ENCODE measurements at regions of chr1 and their contacts with region 1.

Region 1: GRCh38 chr1:206982216-206982615 is 12.0 kb upstream of the FCAMR start:
- DNase-seq: peak; percentile 56 to 68 (median 66)
- H3K4me3 ChIP-seq: no peak overlapping the region
- H3K27ac ChIP-seq: no peak overlapping the region
- H3K4me1 ChIP-seq: peaks cover 0 to 5% (median 0%) of the 10 kb centered on the region in 4 experiments
- H3K27me3 ChIP-seq: peaks cover 0 to 6% (median 0%) of the 10 kb centered on the region in 5 experiments

Region 2: GRCh38 chr1:206734499-206735142 is 247.6 kb before region 1 on chr1:
- CTCF ChIA-PET with region 1: interaction called, 31 read pairs
- POLR2A ChIA-PET with region 1: no interaction called
- DNase-seq: peak; percentile 36 to 69 (median 65)
- H3K4me3 ChIP-seq: no peak overlapping the region
- H3K27ac ChIP-seq: no peak overlapping the region
- H3K4me1 ChIP-seq: peaks cover 0 to 38% (median 36%) of the 10 kb centered on the region in 4 experiments
- H3K27me3 ChIP-seq: no peaks in the 10 kb centered on the region

Region 3: DNA sequence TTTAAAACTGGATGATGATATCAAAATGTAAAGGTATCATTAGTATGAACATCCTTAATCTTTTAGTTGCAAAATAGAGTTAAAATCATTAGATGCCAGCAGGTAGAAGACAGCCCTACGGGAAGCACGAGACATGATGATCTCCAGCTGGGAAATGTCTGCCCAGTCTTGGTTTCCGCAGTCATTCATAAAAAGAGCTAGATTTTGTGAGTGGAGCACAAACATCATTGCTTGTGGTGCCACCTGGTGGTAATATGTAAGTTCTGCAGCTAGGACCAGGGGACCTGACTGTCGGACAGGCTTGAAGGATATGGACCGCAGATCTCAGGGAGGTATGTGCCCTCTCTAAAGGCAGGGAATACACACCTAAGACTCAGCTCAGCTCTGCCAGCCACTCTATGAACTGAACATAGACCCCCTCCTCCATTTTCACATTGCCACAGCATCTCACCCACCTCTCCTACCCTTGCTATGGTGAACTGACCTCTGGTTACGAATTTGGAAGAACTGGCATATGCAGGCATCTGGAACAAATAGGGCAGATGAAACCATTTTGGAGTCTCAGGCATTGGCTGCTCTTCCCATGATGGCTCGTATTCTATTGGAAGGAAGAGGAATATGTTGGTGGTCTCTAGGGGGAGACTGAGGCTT is 69.6 kb before region 1 on chr1:
- CTCF ChIA-PET with region 1: interaction called, 26 read pairs
- POLR2A ChIA-PET with region 1: no interaction called
- DNase-seq: peak; percentile 74 to 84 (median 77)
- H3K4me3 ChIP-seq: no peak overlapping the region
- H3K27ac ChIP-seq: no peak overlapping the region
- H3K4me1 ChIP-seq: peaks cover 3 to 27% (median 13%) of the 10 kb centered on the region in 4 experiments
- H3K27me3 ChIP-seq: peaks cover 0 to 9% (median 0%) of the 10 kb centered on the region in 5 experiments

Region 4: GRCh38 chr1:206935491-206936067 is 46.6 kb before region 1 on chr1:
- CTCF ChIA-PET with region 1: interaction called, 220 read pairs
- POLR2A ChIA-PET with region 1: interaction called, 4 read pairs
- DNase-seq: peak; percentile 72 to 87 (median 85)
- H3K4me3 ChIP-seq: no peak overlapping the region
- H3K27ac ChIP-seq: no peak overlapping the region
- H3K4me1 ChIP-seq: peaks cover under 1 to 2% (median 2%) of the 10 kb centered on the region in 4 experiments
- H3K27me3 ChIP-seq: no peaks in the 10 kb centered on the region

Region 5: DNA sequence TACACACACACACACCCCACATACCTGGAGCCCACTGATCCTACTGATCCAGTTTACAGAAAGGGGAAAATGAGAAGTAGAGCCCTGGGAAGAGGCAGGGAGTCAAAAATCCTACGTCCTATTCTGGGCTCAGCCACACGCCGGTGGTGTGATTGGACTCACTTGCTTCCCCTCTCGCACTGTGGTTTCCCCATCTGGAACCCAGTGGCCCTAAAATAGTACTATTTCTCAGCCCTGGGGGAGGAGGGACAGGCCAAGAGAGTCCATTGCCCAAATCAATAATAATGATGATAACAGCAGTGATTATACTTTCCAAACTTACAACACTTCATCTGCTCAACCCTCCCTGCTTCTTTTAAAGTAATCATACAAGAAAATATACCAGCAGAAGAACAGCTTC is 33.0 kb before region 1 on chr1:
- CTCF ChIA-PET with region 1: interaction called, 35 read pairs
- POLR2A ChIA-PET with region 1: no interaction called
- DNase-seq: peak in 1 of 3 donors; percentile 37
- H3K4me3 ChIP-seq: peak overlapping the region in 1 of 7 experiments; percentile 27
- H3K27ac ChIP-seq: no peak overlapping the region
- H3K4me1 ChIP-seq: peaks cover 0 to 45% (median 16%) of the 10 kb centered on the region in 4 experiments
- H3K27me3 ChIP-seq: no peaks in the 10 kb centered on the region

Region 6: GRCh38 chr1:206971029-206971655 is 11.1 kb before region 1 on chr1:
- CTCF ChIA-PET with region 1: interaction called, 66 read pairs
- POLR2A ChIA-PET with region 1: no interaction called
- DNase-seq: peak in 2 of 3 donors; percentile 19 to 22
- H3K4me3 ChIP-seq: no peak overlapping the region
- H3K27ac ChIP-seq: no peak overlapping the region
- H3K4me1 ChIP-seq: peaks cover 26 to 46% (median 30%) of the 10 kb centered on the region in 4 experiments
- H3K27me3 ChIP-seq: no peaks in the 10 kb centered on the region

Region 7: DNA sequence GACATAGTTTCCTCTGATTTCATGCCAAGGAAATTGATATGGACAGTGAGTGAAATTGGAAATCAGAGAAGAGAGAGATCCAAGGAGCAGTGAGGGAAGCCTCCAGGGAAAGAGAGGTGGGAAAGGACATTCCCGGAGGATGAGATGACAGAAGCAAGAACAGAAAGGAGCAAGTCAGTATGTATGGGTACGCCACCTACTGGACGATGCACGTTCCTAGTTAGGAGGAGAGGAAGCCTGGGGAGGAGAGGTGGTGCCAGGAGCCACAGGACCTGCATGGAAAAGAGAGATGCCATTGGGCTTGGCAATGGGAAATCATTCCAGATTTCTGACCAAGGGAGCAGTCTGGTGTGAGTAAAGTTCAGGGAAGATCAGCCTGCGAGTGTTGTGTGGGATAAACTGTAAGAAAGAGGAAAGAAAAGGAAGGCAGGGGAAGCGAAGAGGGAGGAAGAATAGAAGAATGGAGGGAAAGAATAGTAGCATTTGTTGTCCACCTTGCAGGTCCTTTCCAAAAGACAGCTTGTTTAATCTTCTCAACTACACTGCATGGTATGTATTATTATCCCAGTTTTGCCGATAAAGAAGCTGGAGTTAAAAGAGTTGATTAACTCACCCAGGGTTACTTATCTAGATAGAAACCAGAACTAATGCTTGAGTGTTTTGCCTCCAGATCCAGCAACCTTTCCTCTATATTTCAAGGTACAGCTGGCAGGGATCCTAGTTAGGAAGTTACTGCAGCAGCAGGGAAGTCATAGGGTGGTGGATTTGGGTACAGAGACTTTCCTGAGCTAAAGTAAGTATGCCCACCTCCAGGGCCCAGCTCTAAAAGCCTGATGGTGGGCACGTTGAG is 23.0 kb after region 1 on chr1:
- CTCF ChIA-PET with region 1: interaction called, 10 read pairs
- POLR2A ChIA-PET with region 1: no interaction called
- DNase-seq: peak; percentile 31 to 56 (median 51)
- H3K4me3 ChIP-seq: peak overlapping the region in 1 of 7 experiments; percentile 51
- H3K27ac ChIP-seq: no peak overlapping the region
- H3K4me1 ChIP-seq: peaks cover 0 to 7% (median 0%) of the 10 kb centered on the region in 4 experiments
- H3K27me3 ChIP-seq: no peaks in the 10 kb centered on the region

Region 8: GRCh38 chr1:207155028-207155427 is 172.8 kb after region 1 on chr1:
- CTCF ChIA-PET with region 1: no interaction called
- POLR2A ChIA-PET with region 1: no interaction called
- DNase-seq: no peak
- H3K4me3 ChIP-seq: no peak overlapping the region
- H3K27ac ChIP-seq: no peak overlapping the region
- H3K4me1 ChIP-seq: peaks cover 0 to 3% (median 0%) of the 10 kb centered on the region in 4 experiments
- H3K27me3 ChIP-seq: no peaks in the 10 kb centered on the region

Measured in common myeloid progenitor, CD34-positive (primary cell).